Endothelial cell of umbilical vein (primary cell): ENCODE measurements at regions of chr2 and their contacts with region 1.

Region 1: DNA sequence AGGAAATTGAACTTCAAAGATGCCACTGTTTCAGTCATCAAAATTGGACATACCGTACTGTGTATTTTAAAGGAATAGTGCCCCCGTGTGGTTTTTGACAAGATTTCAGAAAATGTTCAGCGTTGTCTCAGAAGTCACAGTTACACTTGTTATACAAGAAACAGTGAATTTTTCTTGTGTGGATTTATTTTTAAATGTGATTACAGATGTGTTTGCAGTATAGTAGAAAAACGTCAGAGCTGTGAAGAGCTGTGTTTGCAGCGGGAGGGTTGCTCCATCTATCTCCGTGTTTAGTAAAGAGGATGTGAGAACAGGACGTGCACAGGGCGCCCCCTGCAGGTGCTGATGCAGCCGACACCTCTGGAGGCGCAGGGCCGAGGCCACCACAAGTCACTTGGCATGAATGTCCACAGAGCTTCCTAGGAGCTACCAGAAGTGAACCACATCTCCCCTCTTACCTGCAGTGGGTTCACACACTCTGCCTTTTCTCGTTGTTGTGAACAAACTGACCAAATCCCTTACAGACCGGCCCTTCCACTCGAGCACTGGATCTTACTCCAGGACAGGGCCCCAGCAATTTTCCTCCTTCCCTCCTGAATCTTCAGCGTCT is 73.1 kb downstream of the CACNB4 start:
- DNase-seq: peak; percentile 86
- H3K4me3 ChIP-seq: peak overlapping the region; percentile 8 to 64 (median 12)
- H3K27ac ChIP-seq: no peak overlapping the region
- H3K4me1 ChIP-seq: peaks cover 4% of the 10 kb centered on the region
- H3K27me3 ChIP-seq: peaks cover 2 to 17% of the 10 kb centered on the region in 2 experiments
- CTCF ChIP-seq: peak; percentile 97 to 98
- POLR2A ChIP-seq: no peak

Region 2: DNA sequence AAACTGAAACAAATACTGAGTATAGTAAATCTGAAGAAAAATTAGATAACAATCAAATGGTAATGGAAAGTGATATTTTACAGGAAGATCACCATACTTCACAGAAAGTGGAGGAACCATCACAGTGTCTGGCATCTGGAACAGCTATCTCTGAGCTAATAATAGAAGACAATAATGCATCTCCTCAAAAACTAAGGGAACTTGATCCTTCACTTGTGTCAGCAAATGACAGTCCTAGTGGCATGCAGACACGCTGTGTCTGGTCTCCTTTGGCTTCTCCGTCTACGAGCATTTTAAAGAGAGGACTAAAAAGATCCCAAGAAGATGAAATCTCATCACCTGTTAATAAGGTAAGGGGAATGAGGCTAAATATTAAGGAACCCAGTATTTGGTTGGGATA is 560.0 kb before region 1 on chr2:
- CTCF ChIA-PET with region 1: interaction called, 4 read pairs
- POLR2A ChIA-PET with region 1: no interaction called
- dilution Hi-C with region 1: no loop called
- intact Hi-C with region 1: loop called (anchors 5 kb)
- DNase-seq: no peak
- H3K4me3 ChIP-seq: no peak overlapping the region
- H3K27ac ChIP-seq: no peak overlapping the region
- H3K4me1 ChIP-seq: no peaks in the 10 kb centered on the region
- H3K27me3 ChIP-seq: no peaks in the 10 kb centered on the region
- CTCF ChIP-seq: no peak
- POLR2A ChIP-seq: no peak

Region 3: DNA sequence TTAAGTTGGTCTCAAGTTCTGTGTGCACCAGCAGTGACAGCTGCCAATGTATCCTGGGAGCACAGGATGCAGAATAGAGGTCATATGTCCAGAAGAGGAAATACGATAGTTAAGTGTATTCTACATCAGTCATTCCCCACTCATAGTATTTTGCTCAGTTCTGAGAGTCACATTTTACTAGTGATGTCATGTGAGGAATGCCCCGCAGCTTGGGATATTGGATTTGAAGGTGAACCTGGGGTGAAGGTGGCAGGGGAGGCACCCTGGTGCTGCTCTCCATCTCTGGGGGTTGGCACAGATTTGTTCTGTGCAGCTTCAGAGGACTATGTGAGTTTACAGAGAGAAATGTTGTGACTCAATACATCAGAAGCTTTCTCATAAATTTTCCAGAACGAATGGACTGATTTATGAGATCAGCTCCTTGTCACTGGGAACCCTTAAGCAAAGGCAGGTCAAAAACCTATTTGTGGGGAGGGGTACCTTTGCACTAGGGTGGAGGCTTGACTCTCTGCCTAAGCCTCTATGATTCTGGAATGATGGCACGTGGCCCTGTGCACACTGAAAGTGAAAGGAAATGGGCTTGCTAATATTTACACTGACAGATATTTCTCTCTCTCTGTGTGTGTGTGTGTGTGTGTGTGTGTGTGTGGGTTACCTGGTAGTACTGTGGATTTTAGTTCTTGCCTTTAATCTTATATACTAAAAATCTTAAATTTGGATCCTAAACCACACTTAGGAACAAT is 387.4 kb before region 1 on chr2:
- CTCF ChIA-PET with region 1: interaction called, 11 read pairs
- POLR2A ChIA-PET with region 1: no interaction called
- dilution Hi-C with region 1: no loop called
- intact Hi-C with region 1: no loop called
- DNase-seq: peak; percentile 69
- H3K4me3 ChIP-seq: no peak overlapping the region
- H3K27ac ChIP-seq: peak overlapping the region; percentile 81
- H3K4me1 ChIP-seq: peaks cover 22% of the 10 kb centered on the region
- H3K27me3 ChIP-seq: no peaks in the 10 kb centered on the region
- CTCF ChIP-seq: no peak
- POLR2A ChIP-seq: no peak

Region 4: DNA sequence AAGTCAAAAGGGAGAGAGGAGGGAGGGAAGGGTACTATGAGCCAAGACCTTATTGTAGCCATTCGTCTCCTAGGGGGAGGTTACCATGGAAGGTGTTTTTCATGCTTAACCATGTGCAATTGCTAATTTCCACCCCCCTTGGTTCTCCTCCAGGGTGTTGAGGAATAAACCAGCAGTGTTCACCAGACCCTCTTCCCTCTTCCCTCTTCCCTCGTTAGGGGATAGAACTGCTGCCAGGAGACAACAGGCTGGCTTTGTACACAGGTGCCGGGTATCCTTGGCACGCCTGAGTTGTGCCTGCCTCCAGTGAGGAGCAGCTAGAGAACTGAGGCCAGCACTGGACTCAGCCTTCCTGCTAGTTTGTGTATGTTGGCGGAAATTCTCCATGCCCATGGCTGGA is 156.5 kb before region 1 on chr2:
- CTCF ChIA-PET with region 1: no interaction called
- POLR2A ChIA-PET with region 1: no interaction called
- dilution Hi-C with region 1: no loop called
- intact Hi-C with region 1: no loop called
- DNase-seq: no peak
- H3K4me3 ChIP-seq: no peak overlapping the region
- H3K27ac ChIP-seq: no peak overlapping the region
- H3K4me1 ChIP-seq: no peaks in the 10 kb centered on the region
- H3K27me3 ChIP-seq: peaks cover 4 to 8% of the 10 kb centered on the region in 2 experiments
- CTCF ChIP-seq: no peak
- POLR2A ChIP-seq: no peak

Region 5: GRCh38 chr2:151984424-151985083 is 41.2 kb before region 1 on chr2:
- CTCF ChIA-PET with region 1: no interaction called
- POLR2A ChIA-PET with region 1: no interaction called
- dilution Hi-C with region 1: no loop called
- intact Hi-C with region 1: no loop called
- DNase-seq: no peak
- H3K4me3 ChIP-seq: no peak overlapping the region
- H3K27ac ChIP-seq: no peak overlapping the region
- H3K4me1 ChIP-seq: no peaks in the 10 kb centered on the region
- H3K27me3 ChIP-seq: peaks cover 4 to 5% of the 10 kb centered on the region in 2 experiments
- CTCF ChIP-seq: no peak
- POLR2A ChIP-seq: no peak

Region 6: GRCh38 chr2:151999053-151999452 is 26.7 kb before region 1 on chr2:
- CTCF ChIA-PET with region 1: interaction called, 26 read pairs
- POLR2A ChIA-PET with region 1: no interaction called
- dilution Hi-C with region 1: no loop called
- intact Hi-C with region 1: loop called (anchors 1 kb)
- DNase-seq: peak; percentile 37
- H3K4me3 ChIP-seq: no peak overlapping the region
- H3K27ac ChIP-seq: no peak overlapping the region
- H3K4me1 ChIP-seq: no peaks in the 10 kb centered on the region
- H3K27me3 ChIP-seq: peaks cover 0 to 5% of the 10 kb centered on the region in 2 experiments
- CTCF ChIP-seq: peak; percentile 83 to 86
- POLR2A ChIP-seq: no peak

Region 7: DNA sequence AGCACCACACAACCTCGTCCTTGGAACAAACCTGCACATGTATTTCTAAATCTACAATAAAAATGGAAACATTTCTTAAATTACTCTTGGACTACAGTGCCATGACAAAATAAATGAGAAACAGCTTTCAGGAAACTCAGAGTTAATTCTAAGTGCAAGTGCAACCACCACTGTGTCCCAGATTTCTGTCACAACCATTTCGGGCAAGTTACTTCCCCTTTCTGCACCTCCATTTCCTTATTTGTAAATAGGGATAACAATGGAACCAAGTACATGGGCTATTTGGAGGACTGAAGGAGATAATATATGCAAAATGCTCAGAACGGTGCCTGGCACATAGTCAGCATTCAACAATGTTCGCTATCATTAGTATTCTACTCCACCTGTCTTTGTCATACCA is 20.2 kb before region 1 on chr2:
- CTCF ChIA-PET with region 1: interaction called, 14 read pairs
- POLR2A ChIA-PET with region 1: no interaction called
- dilution Hi-C with region 1: no loop called
- intact Hi-C with region 1: no loop called
- DNase-seq: no peak
- H3K4me3 ChIP-seq: no peak overlapping the region
- H3K27ac ChIP-seq: no peak overlapping the region
- H3K4me1 ChIP-seq: no peaks in the 10 kb centered on the region
- H3K27me3 ChIP-seq: peaks cover 4% of the 10 kb centered on the region in 2 experiments
- CTCF ChIP-seq: no peak
- POLR2A ChIP-seq: no peak

Region 8: GRCh38 chr2:152012697-152013096 is 13.1 kb before region 1 on chr2:
- CTCF ChIA-PET with region 1: interaction called, 32 read pairs
- POLR2A ChIA-PET with region 1: no interaction called
- dilution Hi-C with region 1: no loop called
- intact Hi-C with region 1: no loop called
- DNase-seq: no peak
- H3K4me3 ChIP-seq: no peak overlapping the region
- H3K27ac ChIP-seq: no peak overlapping the region
- H3K4me1 ChIP-seq: no peaks in the 10 kb centered on the region
- H3K27me3 ChIP-seq: peaks cover 4% of the 10 kb centered on the region in 2 experiments
- CTCF ChIP-seq: no peak
- POLR2A ChIP-seq: no peak

Region 9: DNA sequence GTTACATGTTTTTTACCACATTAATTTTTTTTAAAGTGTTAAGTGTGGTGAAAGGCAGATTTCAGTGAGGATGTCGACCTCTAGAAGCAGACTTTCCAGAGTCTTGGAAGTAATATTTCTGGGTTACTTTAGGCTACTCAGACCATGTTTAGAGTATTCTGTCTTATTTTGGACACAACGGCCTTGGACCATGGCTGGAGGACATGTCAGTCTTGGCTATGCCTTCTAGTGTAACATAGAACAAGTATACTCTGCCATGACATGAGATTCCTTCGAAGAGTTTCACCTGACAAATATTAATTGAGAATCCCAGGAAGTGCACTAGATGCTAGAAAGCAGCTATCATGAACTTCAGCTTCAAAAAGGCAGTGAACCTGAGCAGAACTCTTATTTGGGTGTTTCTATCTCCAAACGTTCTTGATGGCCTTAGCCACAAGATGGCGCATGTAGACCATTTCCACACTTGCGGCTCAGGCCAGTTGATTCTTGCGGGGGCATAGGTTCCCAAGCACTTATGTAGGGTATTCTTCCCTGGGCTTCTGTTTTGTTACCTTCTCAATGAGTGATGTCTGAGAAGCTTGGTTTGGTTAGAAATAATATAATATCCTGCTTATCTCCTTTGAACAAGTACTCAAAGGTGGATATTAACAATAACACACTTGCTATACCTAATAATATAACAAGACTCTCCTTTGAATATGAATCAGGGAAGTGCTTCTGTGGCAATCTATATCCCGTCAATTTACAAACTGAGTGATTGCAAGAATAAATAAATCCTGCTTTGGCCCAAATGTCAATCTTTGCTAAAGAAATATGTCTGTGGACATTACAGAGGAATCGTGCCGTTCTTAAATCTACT is 11.1 kb after region 1 on chr2:
- CTCF ChIA-PET with region 1: interaction called, 17 read pairs
- POLR2A ChIA-PET with region 1: no interaction called
- dilution Hi-C with region 1: no loop called
- intact Hi-C with region 1: no loop called
- DNase-seq: peak; percentile 75
- H3K4me3 ChIP-seq: no peak overlapping the region
- H3K27ac ChIP-seq: no peak overlapping the region
- H3K4me1 ChIP-seq: peaks cover 3% of the 10 kb centered on the region
- H3K27me3 ChIP-seq: peaks cover 4% of the 10 kb centered on the region in 2 experiments
- CTCF ChIP-seq: peak; percentile 75 to 76
- POLR2A ChIP-seq: no peak

Region 10: DNA sequence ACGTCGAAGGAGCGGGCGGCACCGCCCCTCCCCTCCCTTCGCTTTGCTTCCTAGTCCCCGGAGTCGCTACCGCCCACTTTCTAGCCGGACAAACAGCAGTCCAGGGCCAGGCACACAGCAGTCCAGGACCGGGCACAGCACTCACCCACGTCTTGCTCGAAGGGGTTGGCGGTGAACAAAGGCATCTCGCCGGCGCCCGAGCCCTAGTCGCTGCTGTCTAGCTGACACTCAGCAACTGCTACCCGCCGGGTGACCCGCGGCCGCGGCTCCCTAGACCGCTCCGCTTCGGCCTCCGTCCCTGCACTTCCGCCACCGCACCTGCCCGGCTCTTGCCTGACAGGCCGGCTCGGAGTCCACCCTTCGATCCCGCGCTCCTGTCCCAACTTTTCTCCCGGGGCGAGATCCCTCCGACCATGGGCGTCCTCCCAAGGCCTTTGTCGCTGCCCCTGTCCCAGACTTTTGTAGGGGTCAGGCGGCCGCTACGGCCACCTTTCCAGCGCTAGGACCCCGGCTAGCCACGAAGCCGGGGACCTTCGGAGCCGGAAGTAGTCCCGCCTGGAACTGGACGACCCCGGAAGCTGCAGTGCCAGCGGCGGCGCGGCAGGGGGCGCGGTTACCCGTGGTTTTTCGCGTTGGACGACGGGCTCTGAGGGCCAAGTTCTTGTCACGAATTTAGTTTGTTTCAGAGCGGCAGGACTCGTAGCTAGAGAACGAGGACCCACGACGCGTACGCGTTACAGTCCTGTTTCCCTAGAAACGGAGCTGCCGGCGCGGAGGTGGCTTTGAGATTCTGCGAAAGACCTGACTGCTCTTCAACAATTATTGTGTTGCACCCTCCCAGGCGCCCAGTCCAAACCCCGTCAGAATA is 149.9 kb after region 1 on chr2 and contains the start of gene STAM2:
- CTCF ChIA-PET with region 1: no interaction called
- POLR2A ChIA-PET with region 1: no interaction called
- dilution Hi-C with region 1: no loop called
- intact Hi-C with region 1: no loop called
- DNase-seq: peak; percentile 95
- H3K4me3 ChIP-seq: peak within 1 kb of the TSS; percentile 88 to 95 (median 93)
- H3K27ac ChIP-seq: peak within 1 kb of the TSS; percentile 95
- H3K4me1 ChIP-seq: peaks cover 12% of the 10 kb centered on the region
- H3K27me3 ChIP-seq: peaks cover 0 to 3% of the 10 kb centered on the region in 2 experiments
- CTCF ChIP-seq: peak; percentile 97 to 99
- POLR2A ChIP-seq: peak; percentile 93
- total RNA-seq, gene STAM2: 25.7 and 27.5 TPM in 2 replicates

Region 11: DNA sequence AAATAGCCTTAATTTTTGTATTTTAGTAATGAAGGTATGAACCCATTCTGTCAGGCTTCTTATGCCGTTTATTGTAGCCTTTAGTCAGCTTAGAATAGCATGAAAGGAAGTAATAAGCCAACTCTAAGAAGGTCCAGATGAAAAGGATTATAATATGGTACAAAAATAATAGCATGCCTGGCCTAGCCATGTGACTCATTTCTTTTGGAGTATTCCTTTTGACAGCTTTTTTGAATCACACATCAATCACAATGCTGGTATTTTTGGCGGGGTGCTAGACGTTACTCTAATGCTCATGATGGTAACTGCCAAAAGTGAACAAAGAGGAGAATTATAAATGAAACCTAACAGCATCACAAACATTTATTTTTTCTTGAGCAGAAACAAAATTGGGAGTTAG is 329.1 kb after region 1 on chr2:
- CTCF ChIA-PET with region 1: no interaction called
- POLR2A ChIA-PET with region 1: no interaction called
- dilution Hi-C with region 1: no loop called
- intact Hi-C with region 1: no loop called
- DNase-seq: no peak
- H3K4me3 ChIP-seq: no peak overlapping the region
- H3K27ac ChIP-seq: no peak overlapping the region
- H3K4me1 ChIP-seq: no peaks in the 10 kb centered on the region
- H3K27me3 ChIP-seq: no peaks in the 10 kb centered on the region
- CTCF ChIP-seq: no peak
- POLR2A ChIP-seq: no peak